ENCODE measurements at regions of chr13 and their contacts with region 1.

Region 1: DNA sequence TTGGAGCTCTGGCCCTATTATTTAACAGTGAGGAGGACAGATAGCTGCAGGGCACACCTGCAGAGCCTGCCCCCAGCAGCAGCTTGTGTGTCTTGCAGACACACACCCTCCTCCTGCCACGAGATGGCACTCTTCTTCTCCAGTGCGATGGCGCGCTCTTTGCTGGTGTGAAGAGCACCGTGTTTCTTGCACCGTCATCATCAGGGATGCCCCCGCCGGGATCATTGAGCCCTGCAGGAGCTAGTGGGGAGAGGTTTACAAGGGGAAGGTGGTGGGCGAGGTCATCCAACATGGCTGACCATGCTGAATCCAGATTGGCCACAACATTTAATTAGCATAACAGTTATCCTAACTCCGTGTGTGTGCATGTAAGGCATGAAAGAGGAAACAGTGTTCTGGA is 105.6 kb downstream of the RAB20 start:
- DNase-seq: peak; percentile 84 to 87 (median 86)
- ATAC-seq: peak; percentile 92 to 99 (median 94)
- H3K4me3 ChIP-seq: no peak overlapping the region
- H3K27ac ChIP-seq: no peak overlapping the region
- H3K4me1 ChIP-seq: peaks cover 0 to 10% (median 0%) of the 10 kb centered on the region in 4 donors
- H3K27me3 ChIP-seq: no peaks in the 10 kb centered on the region
- CTCF ChIP-seq: peak; percentile 88 to 93 (median 92)
- POLR2A ChIP-seq: no peak

Region 2: GRCh38 chr13:109853153-109853552 is 602.8 kb before region 1 on chr13:
- intact Hi-C with region 1: no loop called
- DNase-seq: no peak
- ATAC-seq: no peak
- H3K4me3 ChIP-seq: no peak overlapping the region
- H3K27ac ChIP-seq: no peak overlapping the region
- H3K4me1 ChIP-seq: no peaks in the 10 kb centered on the region
- H3K27me3 ChIP-seq: no peaks in the 10 kb centered on the region
- CTCF ChIP-seq: no peak
- POLR2A ChIP-seq: no peak

Region 3: GRCh38 chr13:110509971-110510786 is 54.2 kb after region 1 on chr13:
- intact Hi-C with region 1: loop called in 1 of 2 experiments (anchors 10 kb)
- DNase-seq: peak in 1 of 3 donors; percentile 43
- ATAC-seq: no peak
- H3K4me3 ChIP-seq: no peak overlapping the region
- H3K27ac ChIP-seq: no peak overlapping the region
- H3K4me1 ChIP-seq: peaks cover 0 to 21% (median 12%) of the 10 kb centered on the region in 4 donors
- H3K27me3 ChIP-seq: no peaks in the 10 kb centered on the region
- CTCF ChIP-seq: no peak
- POLR2A ChIP-seq: no peak

Region 4: GRCh38 chr13:110561344-110562035 is 105.5 kb after region 1 on chr13 and contains the start of gene RAB20:
- intact Hi-C with region 1: loop called in 1 of 2 experiments (anchors 10 kb)
- DNase-seq: peak; percentile 95 to 96 (median 95)
- ATAC-seq: peak; percentile 77 to 84 (median 80)
- H3K4me3 ChIP-seq: peak within 1 kb of the TSS; percentile 84 to 96 (median 91)
- H3K27ac ChIP-seq: peak within 1 kb of the TSS; percentile 90 to 98 (median 95)
- H3K4me1 ChIP-seq: peaks cover 0 to 28% (median 7%) of the 10 kb centered on the region in 4 donors
- H3K27me3 ChIP-seq: no peaks in the 10 kb centered on the region
- CTCF ChIP-seq: no peak
- POLR2A ChIP-seq: peak; percentile 79
- total RNA-seq, gene RAB20: 12.5 to 47.2 (median 36.3) TPM